Activated naive CD4-positive, alpha-beta T cell treated with anti-CD3 and anti-CD28 coated beads for 36 hours (primary cell): ENCODE measurements at regions of chr11 and their contacts with region 1.

Region 1: DNA sequence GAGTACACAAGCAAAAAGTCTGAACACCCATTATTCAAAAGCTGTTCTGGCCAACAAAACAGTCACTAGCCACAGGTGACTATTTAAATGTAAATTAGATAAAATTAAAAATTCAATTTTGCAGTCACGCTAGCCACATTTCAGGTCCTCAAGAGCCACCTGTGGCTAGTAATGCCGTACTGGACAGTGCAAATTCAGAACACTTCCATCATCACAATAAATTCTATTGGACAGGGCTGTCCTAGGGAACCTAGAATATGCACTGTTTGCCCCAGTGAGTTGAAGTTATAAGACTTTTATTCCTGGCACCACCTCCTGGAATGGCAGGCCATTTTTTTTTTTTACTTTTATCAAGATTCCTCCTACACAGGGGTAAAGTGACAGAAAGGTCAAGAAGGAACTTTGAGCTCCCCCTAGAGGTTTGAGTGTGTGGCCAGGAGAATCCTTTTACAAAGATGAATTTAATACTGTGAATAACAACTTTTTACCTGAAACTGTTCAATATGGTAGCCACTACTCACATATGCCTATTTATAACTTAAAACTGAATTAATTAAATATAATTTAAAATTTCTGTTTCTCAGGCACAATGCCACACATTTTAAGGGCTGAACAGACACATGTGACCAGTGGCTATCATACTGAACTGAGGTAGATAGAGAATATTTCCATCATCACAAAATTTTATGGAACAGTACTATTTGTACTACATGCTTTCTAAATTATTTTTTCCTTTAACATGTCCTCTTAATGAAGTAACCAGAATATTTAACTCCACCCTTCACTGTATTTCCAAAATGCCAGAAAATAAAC is 6.5 kb downstream of the MSANTD2 start:
- DNase-seq: peak; percentile 30
- H3K4me3 Mint-ChIP-seq: no peak overlapping the region
- H3K27ac Mint-ChIP-seq: no peak overlapping the region
- H3K4me1 Mint-ChIP-seq: peaks cover 41% of the 10 kb centered on the region
- H3K27me3 Mint-ChIP-seq: no peaks in the 10 kb centered on the region

Region 2: GRCh38 chr11:124644426-124645280 is 149.0 kb before region 1 on chr11:
- CTCF ChIA-PET with region 1: interaction called, 5 read pairs
- intact Hi-C with region 1: loop called (anchors 1 kb)
- DNase-seq: peak; percentile 26
- H3K4me3 Mint-ChIP-seq: no peak overlapping the region
- H3K27ac Mint-ChIP-seq: no peak overlapping the region
- H3K4me1 Mint-ChIP-seq: no peaks in the 10 kb centered on the region
- H3K27me3 Mint-ChIP-seq: no peaks in the 10 kb centered on the region

Region 3: DNA sequence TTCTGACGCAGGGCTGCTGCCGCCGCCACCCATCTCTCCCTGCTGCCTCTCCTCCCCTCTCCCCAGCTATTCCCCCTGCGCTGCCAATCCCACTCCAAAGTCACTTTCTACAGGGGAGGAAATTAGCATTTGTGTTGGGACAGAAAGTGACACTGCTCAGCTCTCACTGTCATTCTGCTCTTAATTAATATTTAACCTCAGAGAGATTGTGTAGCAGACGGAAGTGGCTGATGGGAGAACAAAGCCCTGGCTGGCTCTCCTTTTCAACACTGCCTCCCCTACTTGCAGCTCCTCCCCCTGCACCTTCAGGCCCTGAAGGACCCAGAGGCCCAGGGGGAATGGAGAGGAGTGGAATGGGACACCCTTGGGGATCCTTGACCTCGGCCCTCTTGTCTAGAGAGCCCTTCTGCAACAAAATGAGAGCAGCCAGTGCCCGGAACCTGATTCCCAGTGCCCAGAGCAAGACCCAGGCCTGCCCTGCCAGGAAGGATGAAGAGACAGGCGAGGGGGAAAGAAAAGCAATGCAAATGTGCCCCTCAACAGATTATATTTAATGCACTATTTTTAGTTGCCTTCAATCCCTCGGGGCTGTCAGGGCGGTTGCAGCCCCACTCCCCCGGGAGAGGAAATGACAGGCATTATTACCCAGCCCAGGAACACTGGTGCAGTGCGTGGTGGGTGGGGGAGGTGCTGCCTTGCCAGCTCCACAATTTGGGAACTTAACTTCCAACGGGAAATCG is 68.5 kb before region 1 on chr11:
- CTCF ChIA-PET with region 1: no interaction called
- intact Hi-C with region 1: no loop called
- DNase-seq: no peak
- H3K4me3 Mint-ChIP-seq: no peak overlapping the region
- H3K27ac Mint-ChIP-seq: no peak overlapping the region
- H3K4me1 Mint-ChIP-seq: peaks cover 16% of the 10 kb centered on the region
- H3K27me3 Mint-ChIP-seq: peaks cover 8% of the 10 kb centered on the region

Region 4: DNA sequence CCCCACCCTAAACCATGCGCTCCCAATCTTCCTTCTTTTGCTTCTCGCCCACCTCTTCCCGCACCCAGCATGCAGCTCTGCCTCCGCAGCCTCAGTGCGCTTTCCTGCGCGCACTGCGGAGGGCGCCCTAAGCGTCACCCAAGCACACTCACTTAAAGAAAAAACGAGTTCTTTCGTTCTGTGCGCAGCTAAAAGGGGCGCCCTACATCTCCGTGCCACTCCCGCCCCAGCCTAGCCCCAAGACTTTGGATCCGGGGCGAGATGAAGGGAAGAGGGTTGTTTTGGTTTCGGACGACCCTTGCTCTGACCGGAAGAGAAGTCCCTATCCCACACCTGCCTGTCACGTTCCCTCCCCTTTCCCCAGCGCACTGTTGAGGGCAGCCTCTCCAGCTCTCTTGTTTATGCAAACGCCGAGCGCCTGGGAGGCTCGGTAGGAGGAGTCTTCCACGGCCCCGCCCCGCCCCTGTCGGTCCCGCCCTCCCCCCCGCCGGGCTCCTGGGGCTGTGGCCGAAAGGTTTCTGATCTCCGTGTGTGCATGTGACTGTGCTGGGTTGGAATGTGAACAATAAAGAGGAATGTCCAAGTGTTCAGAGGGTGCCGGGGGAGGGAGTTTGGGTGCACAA is 46.9 kb before region 1 on chr11:
- CTCF ChIA-PET with region 1: interaction called, 6 read pairs
- intact Hi-C with region 1: loop called (anchors 1 kb)
- DNase-seq: peak; percentile 76
- H3K4me3 Mint-ChIP-seq: peak overlapping the region; percentile 83
- H3K27ac Mint-ChIP-seq: peak overlapping the region; percentile 75
- H3K4me1 Mint-ChIP-seq: peaks cover 14% of the 10 kb centered on the region
- H3K27me3 Mint-ChIP-seq: no peaks in the 10 kb centered on the region

Region 5: GRCh38 chr11:124778281-124778680 is 15.4 kb before region 1 on chr11:
- CTCF ChIA-PET with region 1: interaction called, 21 read pairs
- intact Hi-C with region 1: no loop called
- DNase-seq: no peak
- H3K4me3 Mint-ChIP-seq: no peak overlapping the region
- H3K27ac Mint-ChIP-seq: no peak overlapping the region
- H3K4me1 Mint-ChIP-seq: peaks cover 21% of the 10 kb centered on the region
- H3K27me3 Mint-ChIP-seq: no peaks in the 10 kb centered on the region

Region 6: DNA sequence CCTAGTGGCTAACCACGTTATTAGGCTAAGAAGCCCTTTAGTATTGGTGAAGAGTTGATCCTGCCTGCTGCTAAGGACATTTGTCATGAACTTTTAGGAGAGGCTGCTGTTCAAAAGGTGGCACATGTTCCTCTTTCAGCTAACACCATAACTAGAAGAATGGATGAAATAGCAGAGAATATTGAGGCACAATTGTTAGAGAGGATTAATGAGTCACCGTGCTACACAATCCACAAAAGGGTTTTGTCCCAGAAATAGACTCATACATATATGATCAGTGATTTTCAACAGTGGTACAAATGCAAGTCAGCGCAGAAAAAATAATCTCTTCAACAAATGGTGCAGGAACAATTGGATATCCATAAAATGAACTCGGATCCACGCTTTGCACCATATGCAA is 13.5 kb after region 1 on chr11:
- CTCF ChIA-PET with region 1: interaction called, 15 read pairs
- intact Hi-C with region 1: no loop called
- DNase-seq: no peak
- H3K4me3 Mint-ChIP-seq: no peak overlapping the region
- H3K27ac Mint-ChIP-seq: no peak overlapping the region
- H3K4me1 Mint-ChIP-seq: no peaks in the 10 kb centered on the region
- H3K27me3 Mint-ChIP-seq: peaks cover 7% of the 10 kb centered on the region